ENCODE measurements at regions of chr9 and their contacts with region 1.

Region 1: GRCh38 chr9:93962561-93963440 is 7.6 kb upstream of the BARX1 start:
- DNase-seq: peak in 1 of 2 experiments; percentile 80
- H3K4me3 ChIP-seq: no peak overlapping the region
- H3K27ac ChIP-seq: no peak overlapping the region
- H3K4me1 ChIP-seq: peaks cover 0 to 21% (median 15%) of the 10 kb centered on the region in 4 experiments; a peak in 6 of 7 replicates
- H3K27me3 ChIP-seq: peaks cover 40 to 51% (median 48%) of the 10 kb centered on the region in 4 experiments
- CTCF ChIP-seq: peak in 2 of 3 experiments; percentile 79 to 80; a peak in 3 of 4 replicates
- EP300 ChIP-seq: no peak
- POLR2A ChIP-seq: no peak
- RAD21 ChIP-seq: peak; percentile 81 to 84

Region 2: DNA sequence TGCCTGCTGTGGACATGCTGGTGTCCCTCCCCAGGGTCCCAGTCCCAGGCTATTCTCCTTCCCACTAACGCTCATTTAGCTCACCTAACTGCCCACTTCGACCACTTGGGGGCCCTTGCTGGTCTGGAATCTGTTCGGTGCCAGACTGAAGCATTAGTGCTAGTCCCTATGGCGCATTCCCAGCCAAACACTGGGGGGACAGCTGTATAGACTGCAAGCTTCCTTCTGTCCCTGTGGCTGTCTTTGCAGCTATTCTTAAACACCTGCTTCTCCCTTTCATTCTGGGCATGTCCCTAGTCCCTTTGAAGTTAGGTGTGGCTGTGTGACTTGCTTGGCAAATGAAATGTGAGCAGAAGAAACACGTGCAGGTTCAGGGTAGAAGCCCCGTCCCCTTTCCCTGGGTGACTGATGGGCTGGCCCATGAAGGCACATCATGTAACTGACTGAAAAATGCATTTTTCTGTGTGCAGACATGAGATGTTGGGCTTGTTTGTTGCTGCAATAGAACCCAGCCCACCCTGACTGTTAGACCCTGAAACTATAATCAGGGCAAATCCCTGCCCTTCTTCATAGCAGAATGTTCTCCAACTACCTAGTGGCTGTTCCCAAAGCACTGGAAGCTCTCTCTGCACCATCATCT is 142.0 kb before region 1 on chr9:
- CTCF ChIA-PET with region 1: interaction called, 12 read pairs
- POLR2A ChIA-PET with region 1: interaction called, 3 read pairs
- DNase-seq: no peak
- H3K4me3 ChIP-seq: no peak overlapping the region
- H3K27ac ChIP-seq: no peak overlapping the region
- H3K4me1 ChIP-seq: no peaks in the 10 kb centered on the region; a peak in 1 of 7 replicates
- H3K27me3 ChIP-seq: peaks cover 0 to 3% (median 0%) of the 10 kb centered on the region in 4 experiments; a peak in 3 of 7 replicates
- CTCF ChIP-seq: peak in 2 of 3 experiments; percentile 66 to 72; a peak in 3 of 4 replicates
- EP300 ChIP-seq: no peak
- POLR2A ChIP-seq: no peak
- RAD21 ChIP-seq: peak; percentile 43 to 59

Region 3: GRCh38 chr9:93871294-93871693 is 91.5 kb before region 1 on chr9:
- CTCF ChIA-PET with region 1: interaction called, 11 read pairs
- POLR2A ChIA-PET with region 1: no interaction called
- DNase-seq: no peak
- H3K4me3 ChIP-seq: no peak overlapping the region
- H3K27ac ChIP-seq: no peak overlapping the region
- H3K4me1 ChIP-seq: peaks cover 1 to 10% (median 9%) of the 10 kb centered on the region in 4 experiments; a peak in 5 of 7 replicates
- H3K27me3 ChIP-seq: no peaks in the 10 kb centered on the region; a peak in 1 of 7 replicates
- CTCF ChIP-seq: peak in 1 of 3 experiments; percentile 40; a peak in 2 of 4 replicates
- EP300 ChIP-seq: no peak
- POLR2A ChIP-seq: no peak
- RAD21 ChIP-seq: peak; percentile 48 to 52

Region 4: DNA sequence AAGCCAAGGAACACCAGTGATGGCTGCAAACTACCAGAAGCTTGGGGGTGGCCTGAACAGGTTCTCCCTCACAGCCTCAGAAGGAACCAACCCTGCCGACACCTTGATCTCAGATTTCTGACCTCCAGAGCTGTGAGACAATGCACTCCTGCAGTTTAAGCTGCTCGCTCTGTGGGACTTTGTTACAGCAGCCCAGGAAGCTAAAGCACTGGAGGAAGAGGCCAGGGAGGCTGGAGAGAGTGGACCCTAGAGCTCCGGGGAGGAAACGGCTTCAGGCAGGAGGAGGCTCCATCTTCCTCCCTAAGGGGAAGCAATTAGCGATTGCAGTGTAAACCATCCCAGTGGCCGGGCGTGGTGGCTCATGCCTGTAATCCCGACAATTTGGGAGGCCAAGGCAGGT is 32.7 kb before region 1 on chr9:
- CTCF ChIA-PET with region 1: interaction called, 12 read pairs
- POLR2A ChIA-PET with region 1: no interaction called
- DNase-seq: no peak
- H3K4me3 ChIP-seq: no peak overlapping the region
- H3K27ac ChIP-seq: no peak overlapping the region
- H3K4me1 ChIP-seq: no peaks in the 10 kb centered on the region
- H3K27me3 ChIP-seq: 0 out of 7 replicates have a peak, but pooled peaks cover 0 to 4% (median 0%) of the 10 kb centered on the region in 4 experiments
- CTCF ChIP-seq: no peak
- EP300 ChIP-seq: no peak
- POLR2A ChIP-seq: no peak
- RAD21 ChIP-seq: no peak

Region 5: GRCh38 chr9:93978551-93978950 is 15.8 kb after region 1 on chr9:
- CTCF ChIA-PET with region 1: interaction called, 15 read pairs
- POLR2A ChIA-PET with region 1: no interaction called
- DNase-seq: no peak
- H3K4me3 ChIP-seq: no peak overlapping the region
- H3K27ac ChIP-seq: no peak overlapping the region
- H3K4me1 ChIP-seq: no peaks in the 10 kb centered on the region
- H3K27me3 ChIP-seq: no peaks in the 10 kb centered on the region
- CTCF ChIP-seq: no peak
- EP300 ChIP-seq: no peak
- POLR2A ChIP-seq: no peak
- RAD21 ChIP-seq: no peak